K562 (cell line): ENCODE measurements at regions of chr6 and their contacts with region 1.

Region 1: DNA sequence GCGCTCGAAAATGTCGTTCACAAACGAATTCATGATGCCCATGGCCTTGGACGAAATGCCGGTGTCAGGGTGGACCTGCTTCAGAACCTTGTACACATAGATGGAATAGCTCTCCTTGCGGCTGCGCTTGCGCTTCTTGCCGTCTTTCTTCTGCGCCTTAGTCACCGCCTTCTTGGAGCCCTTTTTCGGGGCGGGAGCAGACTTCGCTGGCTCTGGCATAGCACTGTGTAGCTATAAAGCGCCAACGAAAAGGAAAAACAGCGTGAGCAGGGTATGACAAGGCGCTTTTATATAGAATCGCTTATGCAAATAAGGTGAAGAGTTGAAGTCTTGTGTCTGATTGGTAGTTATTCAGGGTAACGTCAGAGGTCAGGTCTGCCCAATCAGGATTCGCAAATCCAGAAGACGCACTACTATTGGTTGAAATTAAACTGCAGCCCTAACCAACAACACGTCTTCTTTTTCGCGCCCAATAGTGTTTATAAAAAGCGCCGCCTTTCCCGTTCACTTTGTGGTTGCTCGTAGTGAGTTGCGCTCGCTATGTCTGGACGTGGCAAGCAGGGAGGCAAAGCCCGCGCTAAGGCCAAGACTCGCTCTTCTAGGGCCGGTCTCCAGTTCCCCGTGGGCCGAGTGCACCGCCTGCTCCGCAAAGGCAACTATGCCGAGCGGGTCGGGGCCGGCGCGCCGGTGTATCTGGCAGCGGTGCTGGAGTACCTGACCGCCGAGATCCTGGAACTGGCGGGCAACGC is 114.8 kb upstream of the PRSS16 start:
- DNase-seq: peak; percentile 93 to 100 (median 97)
- ATAC-seq: peak; percentile 68
- H3K4me3 ChIP-seq: peak overlapping the region; percentile 72
- H3K27ac ChIP-seq: peak overlapping the region; percentile 98
- H3K4me1 ChIP-seq: peaks cover 6 to 7% of the 10 kb centered on the region in 2 experiments
- H3K27me3 ChIP-seq: no peaks in the 10 kb centered on the region
- CTCF ChIP-seq: peak in 1 of 3 experiments; percentile 7; a peak in 1 of 6 replicates
- EP300 ChIP-seq: peak; percentile 26; the same call in 1 of the 2 replicates
- POLR2A ChIP-seq: peak; percentile 100
- RAD21 ChIP-seq: peak in 1 of 2 experiments; percentile 36; a peak in 2 of 4 replicates

Region 2: GRCh38 chr6:26025894-26026832 is 1106.5 kb before region 1 on chr6:
- CTCF ChIA-PET with region 1: interaction called, 4 read pairs
- POLR2A ChIA-PET with region 1: interaction called, 29 read pairs
- in situ Hi-C with region 1: loop called (anchors 5 kb)
- intact Hi-C with region 1: no loop called
- DNase-seq: peak; percentile 72 to 98 (median 76)
- ATAC-seq: peak; percentile 43
- H3K4me3 ChIP-seq: peak overlapping the region; percentile 46
- H3K27ac ChIP-seq: peak overlapping the region; percentile 99
- H3K4me1 ChIP-seq: peaks cover 13 to 40% of the 10 kb centered on the region in 2 experiments
- H3K27me3 ChIP-seq: no peaks in the 10 kb centered on the region
- CTCF ChIP-seq: peak; percentile 81 to 98 (median 97)
- EP300 ChIP-seq: peak; percentile 75
- POLR2A ChIP-seq: no peak
- RAD21 ChIP-seq: peak; percentile 48 to 77

Region 3: DNA sequence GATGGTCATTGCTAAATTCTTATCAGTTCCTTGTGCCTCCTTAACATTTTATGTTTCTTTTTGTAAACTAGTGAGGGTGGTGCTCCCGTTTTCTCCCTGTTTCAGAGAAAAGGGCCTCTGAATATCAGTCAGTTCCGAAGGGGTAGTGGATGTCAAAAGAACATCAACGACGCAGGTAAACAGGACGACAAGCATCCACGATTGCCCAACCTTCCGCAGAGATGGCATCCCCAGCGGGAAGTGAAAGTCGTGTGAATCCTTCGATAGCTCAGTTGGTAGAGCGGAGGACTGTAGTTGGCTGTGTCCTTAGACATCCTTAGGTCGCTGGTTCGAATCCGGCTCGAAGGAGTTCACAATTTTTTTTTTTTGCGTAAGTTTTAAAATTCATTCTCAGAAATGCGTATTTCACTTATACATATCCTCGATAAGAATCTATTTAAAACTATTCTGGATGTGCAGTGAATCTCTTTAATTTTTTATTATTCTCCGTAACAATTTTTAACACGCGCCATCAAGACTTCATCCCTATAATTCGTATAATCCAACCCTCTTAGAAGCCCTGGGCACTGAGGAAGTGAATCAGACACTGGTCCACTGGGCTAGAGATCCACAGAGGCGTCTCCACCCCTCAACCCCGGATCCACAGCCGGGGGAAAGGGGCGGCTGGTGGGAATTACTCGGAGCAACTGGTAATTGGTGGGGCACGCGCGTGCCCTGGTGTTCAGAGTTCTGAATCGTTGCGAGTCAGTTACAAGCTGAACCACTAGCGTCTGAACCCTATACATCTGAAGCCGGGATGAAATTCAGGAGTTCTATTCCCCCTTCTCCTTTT is 563.9 kb before region 1 on chr6:
- CTCF ChIA-PET with region 1: no interaction called
- POLR2A ChIA-PET with region 1: interaction called, 24 read pairs
- in situ Hi-C with region 1: no loop called
- intact Hi-C with region 1: no loop called
- DNase-seq: peak; percentile 82 to 96 (median 84)
- ATAC-seq: peak; percentile 75
- H3K4me3 ChIP-seq: peak overlapping the region; percentile 75
- H3K27ac ChIP-seq: peak overlapping the region; percentile 92
- H3K4me1 ChIP-seq: peaks cover 3 to 8% of the 10 kb centered on the region in 2 experiments; a peak in 2 of 5 replicates
- H3K27me3 ChIP-seq: no peaks in the 10 kb centered on the region
- CTCF ChIP-seq: peak; percentile 80 to 83 (median 81)
- EP300 ChIP-seq: peak; percentile 76
- POLR2A ChIP-seq: peak; percentile 24; the same call in 1 of the 2 replicates
- RAD21 ChIP-seq: peak; percentile 88 to 90

Region 4: GRCh38 chr6:27114792-27115191 is 17.9 kb before region 1 on chr6:
- CTCF ChIA-PET with region 1: interaction called, 4 read pairs
- POLR2A ChIA-PET with region 1: interaction called, 18 read pairs
- in situ Hi-C with region 1: no loop called
- intact Hi-C with region 1: no loop called
- DNase-seq: no peak
- ATAC-seq: peak; percentile 40
- H3K4me3 ChIP-seq: no peak overlapping the region
- H3K27ac ChIP-seq: peak overlapping the region; percentile 61
- H3K4me1 ChIP-seq: peaks cover 10% of the 10 kb centered on the region in 2 experiments; a peak in 3 of 5 replicates
- H3K27me3 ChIP-seq: no peaks in the 10 kb centered on the region
- CTCF ChIP-seq: no peak
- EP300 ChIP-seq: no peak
- POLR2A ChIP-seq: no peak
- RAD21 ChIP-seq: no peak

Region 5: DNA sequence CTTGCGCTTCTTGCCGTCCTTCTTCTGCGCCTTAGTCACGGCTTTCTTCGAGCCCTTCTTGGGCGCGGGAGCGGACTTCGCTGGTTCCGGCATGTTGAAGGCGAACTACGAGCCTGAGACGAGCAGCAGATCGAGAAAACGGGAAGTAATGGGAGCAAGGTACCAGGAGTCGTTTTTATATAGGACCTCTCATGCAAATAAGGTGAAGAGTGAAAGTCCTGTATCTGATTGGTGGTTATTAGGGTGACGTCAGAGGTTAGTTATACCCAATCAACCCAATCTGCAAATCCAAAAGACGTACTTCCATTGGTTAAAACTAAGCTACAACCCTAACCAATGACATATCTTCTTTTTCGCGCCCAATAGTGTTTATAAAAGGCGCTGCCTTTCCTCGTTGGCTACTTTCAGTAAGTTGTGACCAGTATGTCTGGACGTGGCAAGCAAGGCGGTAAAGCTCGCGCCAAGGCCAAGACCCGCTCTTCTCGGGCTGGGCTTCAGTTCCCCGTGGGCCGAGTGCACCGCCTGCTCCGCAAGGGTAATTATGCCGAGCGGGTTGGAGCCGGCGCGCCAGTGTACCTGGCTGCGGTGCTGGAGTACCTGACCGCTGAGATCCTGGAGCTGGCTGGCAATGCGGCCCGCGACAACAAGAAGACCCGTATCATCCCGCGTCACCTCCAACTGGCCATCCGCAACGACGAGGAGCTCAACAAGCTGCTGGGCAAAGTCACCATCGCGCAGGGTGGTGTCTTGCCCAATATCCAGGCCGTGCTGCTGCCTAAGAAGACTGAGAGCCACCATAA is 14.2 kb after region 1 on chr6:
- CTCF ChIA-PET with region 1: interaction called, 3 read pairs
- POLR2A ChIA-PET with region 1: interaction called, 726 read pairs
- in situ Hi-C with region 1: no loop called
- intact Hi-C with region 1: loop called (anchors 1 kb)
- DNase-seq: peak; percentile 93 to 99 (median 98)
- ATAC-seq: peak; percentile 68
- H3K4me3 ChIP-seq: peak overlapping the region; percentile 71
- H3K27ac ChIP-seq: peak overlapping the region; percentile 94
- H3K4me1 ChIP-seq: peaks cover 4 to 13% of the 10 kb centered on the region in 2 experiments
- H3K27me3 ChIP-seq: no peaks in the 10 kb centered on the region
- CTCF ChIP-seq: no peak
- EP300 ChIP-seq: no peak; the same call in 1 of the 2 replicates
- POLR2A ChIP-seq: peak; percentile 100
- RAD21 ChIP-seq: no peak; a peak in 1 of 4 replicates

Region 6: GRCh38 chr6:27188885-27189418 is 56.2 kb after region 1 on chr6:
- CTCF ChIA-PET with region 1: no interaction called
- POLR2A ChIA-PET with region 1: interaction called, 12 read pairs
- in situ Hi-C with region 1: no loop called
- intact Hi-C with region 1: loop called (anchors 1 kb)
- DNase-seq: peak; percentile 69 to 93 (median 78)
- ATAC-seq: peak; percentile 85
- H3K4me3 ChIP-seq: peak overlapping the region; percentile 56
- H3K27ac ChIP-seq: peak overlapping the region; percentile 80
- H3K4me1 ChIP-seq: peaks cover 8% of the 10 kb centered on the region in 2 experiments; a peak in 4 of 5 replicates
- H3K27me3 ChIP-seq: no peaks in the 10 kb centered on the region
- CTCF ChIP-seq: peak; percentile 78 to 92 (median 85)
- EP300 ChIP-seq: no peak; the same call in 1 of the 2 replicates
- POLR2A ChIP-seq: no peak
- RAD21 ChIP-seq: peak; percentile 93 to 95

Region 7: DNA sequence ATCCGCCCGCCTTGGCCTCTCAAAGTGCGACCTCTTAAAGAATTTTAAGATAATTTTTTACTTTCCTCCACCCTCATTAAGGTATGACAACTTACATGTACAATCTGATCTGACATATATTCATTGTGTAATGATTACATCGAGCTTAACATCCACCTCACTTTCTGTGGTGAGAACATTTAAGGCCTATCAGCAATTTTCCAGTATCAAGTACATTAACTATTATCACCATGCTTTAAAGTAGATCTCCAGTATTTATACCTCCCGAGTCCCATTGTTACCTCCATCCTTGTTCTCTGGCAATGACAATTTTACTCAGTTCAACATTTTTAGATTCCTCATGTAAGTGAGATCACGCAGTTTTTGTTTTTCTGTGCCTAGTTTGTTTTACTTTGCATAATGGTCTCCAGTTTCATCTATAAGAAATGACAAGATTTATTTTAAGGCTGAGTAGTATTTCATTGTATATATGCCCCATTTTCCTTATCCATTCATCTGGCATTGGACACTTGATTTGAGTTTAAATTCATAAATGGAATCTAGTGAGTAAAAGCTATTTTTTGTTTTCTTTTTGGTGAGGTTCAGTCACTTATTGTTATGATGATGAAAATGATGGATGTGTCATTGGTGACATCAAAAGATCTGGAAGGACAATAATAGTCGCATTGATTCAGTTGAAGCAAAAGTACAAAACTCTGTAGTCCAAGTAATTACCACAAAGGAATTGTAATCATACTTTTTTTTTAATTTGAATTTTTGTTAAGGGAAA is 692.5 kb after region 1 on chr6:
- CTCF ChIA-PET with region 1: no interaction called
- POLR2A ChIA-PET with region 1: interaction called, 11 read pairs
- in situ Hi-C with region 1: no loop called
- intact Hi-C with region 1: no loop called
- DNase-seq: peak in 1 of 4 experiments; percentile 12
- ATAC-seq: no peak
- H3K4me3 ChIP-seq: peak overlapping the region; percentile 50
- H3K27ac ChIP-seq: peak overlapping the region; percentile 83
- H3K4me1 ChIP-seq: peaks cover 0 to 8% of the 10 kb centered on the region in 2 experiments; a peak in 3 of 5 replicates
- H3K27me3 ChIP-seq: no peaks in the 10 kb centered on the region
- CTCF ChIP-seq: no peak
- EP300 ChIP-seq: no peak
- POLR2A ChIP-seq: peak; percentile 38
- RAD21 ChIP-seq: no peak